Mammary epithelial cell (primary cell): ENCODE measurements at regions of chr3 and their contacts with region 1.

Region 1: DNA sequence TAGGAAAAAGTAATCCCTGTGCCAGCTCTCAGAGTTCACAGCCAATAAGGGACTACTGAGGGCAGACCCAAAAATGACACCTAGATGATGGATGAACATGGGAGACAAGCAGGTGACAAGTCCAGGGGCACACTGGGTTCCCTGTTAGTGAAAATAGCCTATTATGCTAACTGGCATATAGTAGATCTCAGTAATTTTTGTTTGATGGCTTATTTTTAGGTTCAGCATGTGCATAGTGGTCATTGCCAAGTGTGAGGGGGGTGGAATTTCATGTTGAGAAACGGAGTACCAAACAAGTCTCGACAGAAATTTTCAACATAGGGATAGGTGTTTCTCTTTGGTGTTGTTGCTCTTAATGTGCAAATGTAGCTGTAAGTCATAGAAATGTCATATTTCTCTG is 6.4 kb upstream of the ITGB5 start:
- DNase-seq: peak; percentile 54
- H3K4me3 ChIP-seq: no peak overlapping the region
- H3K27ac ChIP-seq: no peak overlapping the region
- H3K4me1 ChIP-seq: peaks cover 25% of the 10 kb centered on the region
- H3K27me3 ChIP-seq: no peaks in the 10 kb centered on the region
- CTCF ChIP-seq: no peak

Region 2: GRCh38 chr3:124761250-124761796 is 132.2 kb before region 1 on chr3:
- CTCF ChIA-PET with region 1: no interaction called
- dilution Hi-C with region 1: loop called (anchors 5 kb)
- in situ Hi-C with region 1: no loop called
- intact Hi-C with region 1: loop called (anchors 5 kb)
- DNase-seq: peak; percentile 46
- H3K4me3 ChIP-seq: no peak overlapping the region
- H3K27ac ChIP-seq: no peak overlapping the region
- H3K4me1 ChIP-seq: no peaks in the 10 kb centered on the region
- H3K27me3 ChIP-seq: no peaks in the 10 kb centered on the region
- CTCF ChIP-seq: peak; percentile 95 to 98

Region 3: DNA sequence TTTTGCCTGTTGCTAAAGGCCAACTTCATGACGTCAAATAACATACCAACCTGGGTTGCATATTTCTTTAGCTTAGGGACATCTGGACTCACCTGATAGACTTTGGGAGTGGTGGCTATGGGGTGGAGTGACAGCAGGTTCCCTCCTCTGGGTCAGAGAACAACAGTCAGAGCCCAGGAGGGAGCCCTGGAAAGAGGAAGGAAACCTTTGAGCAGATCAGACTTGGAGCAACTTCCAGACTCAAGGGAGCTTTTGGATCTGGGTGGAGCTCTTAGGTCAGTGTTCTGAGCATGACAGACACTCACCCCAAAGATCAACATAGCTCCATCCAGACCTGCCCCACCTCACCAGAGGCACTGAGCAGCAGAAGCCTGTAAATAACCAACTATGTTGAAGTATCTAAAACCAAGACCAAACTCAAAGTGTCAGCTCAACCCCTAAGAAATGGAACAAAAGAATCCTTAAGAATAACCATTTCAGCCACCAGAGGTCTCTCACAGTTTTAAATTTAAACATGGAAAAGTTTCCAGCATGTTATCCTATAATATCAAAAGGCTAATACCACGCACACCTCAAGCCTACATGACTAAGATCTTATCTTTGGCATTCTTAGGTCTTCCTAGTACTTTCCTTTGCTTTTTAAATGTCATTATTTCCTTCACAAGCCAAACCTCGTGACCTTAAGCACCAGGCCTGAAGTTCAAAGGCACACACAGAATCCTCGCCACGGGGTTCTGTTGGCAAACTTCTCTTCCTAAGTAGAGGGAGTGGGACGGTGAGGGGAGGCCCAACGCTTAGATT is 106.9 kb before region 1 on chr3:
- CTCF ChIA-PET with region 1: no interaction called
- dilution Hi-C with region 1: no loop called
- in situ Hi-C with region 1: no loop called
- intact Hi-C with region 1: no loop called
- DNase-seq: peak; percentile 6
- H3K4me3 ChIP-seq: no peak overlapping the region
- H3K27ac ChIP-seq: no peak overlapping the region
- H3K4me1 ChIP-seq: peaks cover 6% of the 10 kb centered on the region
- H3K27me3 ChIP-seq: no peaks in the 10 kb centered on the region
- CTCF ChIP-seq: peak; percentile 31 to 35

Region 4: GRCh38 chr3:124821356-124821755 is 72.2 kb before region 1 on chr3:
- CTCF ChIA-PET with region 1: interaction called, 15 read pairs
- dilution Hi-C with region 1: no loop called
- in situ Hi-C with region 1: no loop called
- intact Hi-C with region 1: no loop called
- DNase-seq: no peak
- H3K4me3 ChIP-seq: no peak overlapping the region
- H3K27ac ChIP-seq: no peak overlapping the region
- H3K4me1 ChIP-seq: peaks cover 9% of the 10 kb centered on the region
- H3K27me3 ChIP-seq: no peaks in the 10 kb centered on the region
- CTCF ChIP-seq: no peak

Region 5: DNA sequence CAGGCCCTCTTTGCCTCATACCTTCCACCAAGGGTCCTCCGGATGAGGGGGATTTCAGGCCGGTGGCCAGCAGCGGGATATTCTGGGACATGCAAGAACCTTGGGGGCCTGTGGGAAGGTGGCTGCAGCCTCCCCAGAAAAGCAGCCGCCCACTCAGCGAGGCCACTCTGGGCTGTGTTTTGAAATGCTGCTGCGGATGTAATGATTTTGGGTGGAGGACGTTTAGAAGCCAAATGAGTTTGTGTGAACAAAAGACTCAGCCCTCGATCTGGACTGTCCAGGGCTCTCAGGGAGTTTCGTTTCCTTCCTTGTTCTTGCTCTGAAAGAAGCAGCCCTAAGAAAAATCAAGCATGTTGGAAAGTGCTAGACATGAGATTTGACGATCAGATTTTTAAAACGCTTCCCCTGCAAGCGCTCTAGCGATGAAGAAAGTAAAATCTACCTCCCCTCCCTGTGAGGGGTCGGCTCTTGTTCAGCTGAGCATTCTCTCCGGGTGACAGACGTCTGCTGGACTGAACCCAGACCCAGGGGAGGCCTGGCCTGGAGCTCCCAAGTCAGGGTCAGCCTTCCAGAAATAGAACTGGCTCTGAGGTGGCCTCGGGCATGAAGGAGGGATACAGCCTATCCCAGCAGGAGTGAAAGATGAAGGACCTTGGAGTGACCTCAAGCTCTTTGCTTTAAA is 149.3 kb after region 1 on chr3:
- CTCF ChIA-PET with region 1: no interaction called
- dilution Hi-C with region 1: no loop called
- in situ Hi-C with region 1: no loop called
- intact Hi-C with region 1: no loop called
- DNase-seq: no peak
- H3K4me3 ChIP-seq: no peak overlapping the region
- H3K27ac ChIP-seq: no peak overlapping the region
- H3K4me1 ChIP-seq: peaks cover 33% of the 10 kb centered on the region
- H3K27me3 ChIP-seq: no peaks in the 10 kb centered on the region
- CTCF ChIP-seq: no peak

Region 6: GRCh38 chr3:125594581-125595011 is 701.1 kb after region 1 on chr3:
- CTCF ChIA-PET with region 1: interaction called, 20 read pairs
- dilution Hi-C with region 1: no loop called
- in situ Hi-C with region 1: no loop called
- intact Hi-C with region 1: no loop called
- DNase-seq: peak; percentile 21
- H3K4me3 ChIP-seq: peak overlapping the region; percentile 88 to 98 (median 94)
- H3K27ac ChIP-seq: peak overlapping the region; percentile 79
- H3K4me1 ChIP-seq: peaks cover 16% of the 10 kb centered on the region
- H3K27me3 ChIP-seq: no peaks in the 10 kb centered on the region
- CTCF ChIP-seq: no peak